Activated CD4-positive, alpha-beta memory T cell treated with anti-CD3 and anti-CD28 coated beads for 36 hours (primary cell): ENCODE measurements at regions of chr5 and their contacts with region 1.

Region 1: DNA sequence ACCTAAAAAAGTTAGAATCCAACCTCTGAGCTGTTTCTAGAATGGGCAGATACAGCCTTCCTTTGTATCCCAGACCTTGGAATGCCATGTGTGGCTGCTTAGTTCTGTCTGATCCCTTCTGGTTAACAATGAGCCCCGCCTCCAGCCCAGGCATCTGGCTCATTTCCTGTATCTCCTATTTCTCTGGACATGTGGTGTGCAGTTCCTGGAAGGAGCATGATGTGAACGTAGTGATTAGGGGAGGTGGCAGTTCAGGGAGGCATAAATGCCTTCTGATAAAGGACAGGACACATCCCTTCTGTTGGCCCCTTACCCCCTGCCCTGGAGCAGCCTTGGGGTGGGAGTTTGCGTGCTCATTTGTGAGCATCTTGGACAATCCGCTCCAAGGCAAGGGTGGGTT is 243.0 kb downstream of the ZSWIM6 start:
- DNase-seq: no peak
- H3K4me3 Mint-ChIP-seq: no peak overlapping the region
- H3K27ac Mint-ChIP-seq: no peak overlapping the region
- H3K4me1 Mint-ChIP-seq: no peaks in the 10 kb centered on the region
- H3K27me3 Mint-ChIP-seq: no peaks in the 10 kb centered on the region

Region 2: DNA sequence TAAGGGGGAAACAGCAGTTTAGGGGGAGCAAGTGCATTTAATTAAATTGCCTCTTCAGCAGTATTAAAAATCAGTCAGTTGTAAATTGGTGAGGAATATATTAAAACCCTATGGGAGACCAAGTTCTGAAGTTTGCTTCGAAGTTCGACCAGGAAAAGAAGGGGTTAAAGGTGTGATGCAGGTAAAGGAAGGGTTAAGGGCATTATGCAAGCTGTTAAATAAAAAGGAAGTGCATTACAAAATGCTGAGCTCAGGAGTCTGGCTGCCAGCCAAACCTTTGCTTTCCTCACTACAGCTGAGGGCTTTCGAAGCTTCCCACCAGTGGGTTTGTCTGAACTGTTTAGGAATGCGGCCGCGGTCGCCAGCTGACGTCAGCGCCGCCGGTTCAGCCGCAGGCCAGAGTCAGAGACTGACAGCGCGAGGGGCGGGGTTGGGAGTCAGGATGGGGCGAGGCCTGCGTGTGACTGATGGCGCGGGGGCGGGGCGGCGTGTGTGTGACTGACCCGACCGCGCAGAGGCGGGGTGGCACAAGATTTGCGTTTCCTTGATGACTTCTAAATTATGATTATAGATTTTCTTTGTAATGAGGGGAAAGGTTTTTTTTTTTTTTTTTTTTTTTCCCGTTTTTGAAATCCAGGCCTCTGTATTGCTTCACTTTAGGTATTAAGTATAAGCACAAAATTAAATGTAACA is 166.5 kb before region 1 on chr5:
- CTCF ChIA-PET with region 1: no interaction called
- POLR2A ChIA-PET with region 1: no interaction called
- intact Hi-C with region 1: loop called (anchors 2 kb)
- DNase-seq: peak; percentile 98
- H3K4me3 Mint-ChIP-seq: peak overlapping the region; percentile 55
- H3K27ac Mint-ChIP-seq: peak overlapping the region; percentile 50
- H3K4me1 Mint-ChIP-seq: peaks cover 29% of the 10 kb centered on the region
- H3K27me3 Mint-ChIP-seq: no peaks in the 10 kb centered on the region

Region 3: GRCh38 chr5:61534481-61535267 is 40.4 kb before region 1 on chr5:
- CTCF ChIA-PET with region 1: no interaction called
- POLR2A ChIA-PET with region 1: no interaction called
- intact Hi-C with region 1: loop called (anchors 1 kb)
- DNase-seq: peak; percentile 28
- H3K4me3 Mint-ChIP-seq: no peak overlapping the region
- H3K27ac Mint-ChIP-seq: peak overlapping the region; percentile 54
- H3K4me1 Mint-ChIP-seq: peaks cover 18% of the 10 kb centered on the region
- H3K27me3 Mint-ChIP-seq: no peaks in the 10 kb centered on the region

Region 4: GRCh38 chr5:61678966-61679365 is 103.9 kb after region 1 on chr5:
- CTCF ChIA-PET with region 1: no interaction called
- POLR2A ChIA-PET with region 1: no interaction called
- intact Hi-C with region 1: no loop called
- DNase-seq: no peak
- H3K4me3 Mint-ChIP-seq: no peak overlapping the region
- H3K27ac Mint-ChIP-seq: no peak overlapping the region
- H3K4me1 Mint-ChIP-seq: no peaks in the 10 kb centered on the region
- H3K27me3 Mint-ChIP-seq: peaks cover 6% of the 10 kb centered on the region